ENCODE measurements at regions of chr22 and their contacts with region 1.

Region 1: DNA sequence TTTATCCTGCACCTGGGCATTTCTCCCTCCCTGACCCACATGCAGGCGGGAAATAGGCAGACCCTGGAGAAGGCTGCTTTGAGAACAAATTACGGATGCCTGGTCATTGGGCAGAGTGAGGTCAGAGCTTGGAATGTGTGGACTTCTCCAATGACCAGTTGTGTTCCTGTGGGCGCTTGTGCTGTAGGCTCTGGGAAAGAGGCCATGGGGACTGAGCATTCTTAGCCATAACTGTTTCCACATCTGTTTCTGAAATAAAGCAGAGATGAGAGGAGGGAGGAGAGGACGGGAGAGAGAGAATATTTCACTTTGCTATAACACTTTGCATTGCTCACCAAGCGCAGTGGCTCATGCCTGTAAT is 11.2 kb upstream of the TMEM184B start:
- DNase-seq: no peak
- H3K4me3 Mint-ChIP-seq: no peak overlapping the region
- H3K27ac Mint-ChIP-seq: peak overlapping the region; percentile 61
- H3K4me1 Mint-ChIP-seq: peaks cover 16% of the 10 kb centered on the region
- H3K27me3 Mint-ChIP-seq: no peaks in the 10 kb centered on the region
- CTCF ChIP-seq: no peak

Region 2: GRCh38 chr22:38298312-38299000 is 14.4 kb after region 1 on chr22:
- CTCF ChIA-PET with region 1: interaction called, 3 read pairs
- POLR2A ChIA-PET with region 1: interaction called, 30 read pairs
- intact Hi-C with region 1: no loop called
- DNase-seq: peak; percentile 100
- H3K4me3 Mint-ChIP-seq: peak overlapping the region; percentile 45
- H3K27ac Mint-ChIP-seq: peak overlapping the region; percentile 98
- H3K4me1 Mint-ChIP-seq: peaks cover 42% of the 10 kb centered on the region
- H3K27me3 Mint-ChIP-seq: no peaks in the 10 kb centered on the region
- CTCF ChIP-seq: peak; percentile 50

Region 3: DNA sequence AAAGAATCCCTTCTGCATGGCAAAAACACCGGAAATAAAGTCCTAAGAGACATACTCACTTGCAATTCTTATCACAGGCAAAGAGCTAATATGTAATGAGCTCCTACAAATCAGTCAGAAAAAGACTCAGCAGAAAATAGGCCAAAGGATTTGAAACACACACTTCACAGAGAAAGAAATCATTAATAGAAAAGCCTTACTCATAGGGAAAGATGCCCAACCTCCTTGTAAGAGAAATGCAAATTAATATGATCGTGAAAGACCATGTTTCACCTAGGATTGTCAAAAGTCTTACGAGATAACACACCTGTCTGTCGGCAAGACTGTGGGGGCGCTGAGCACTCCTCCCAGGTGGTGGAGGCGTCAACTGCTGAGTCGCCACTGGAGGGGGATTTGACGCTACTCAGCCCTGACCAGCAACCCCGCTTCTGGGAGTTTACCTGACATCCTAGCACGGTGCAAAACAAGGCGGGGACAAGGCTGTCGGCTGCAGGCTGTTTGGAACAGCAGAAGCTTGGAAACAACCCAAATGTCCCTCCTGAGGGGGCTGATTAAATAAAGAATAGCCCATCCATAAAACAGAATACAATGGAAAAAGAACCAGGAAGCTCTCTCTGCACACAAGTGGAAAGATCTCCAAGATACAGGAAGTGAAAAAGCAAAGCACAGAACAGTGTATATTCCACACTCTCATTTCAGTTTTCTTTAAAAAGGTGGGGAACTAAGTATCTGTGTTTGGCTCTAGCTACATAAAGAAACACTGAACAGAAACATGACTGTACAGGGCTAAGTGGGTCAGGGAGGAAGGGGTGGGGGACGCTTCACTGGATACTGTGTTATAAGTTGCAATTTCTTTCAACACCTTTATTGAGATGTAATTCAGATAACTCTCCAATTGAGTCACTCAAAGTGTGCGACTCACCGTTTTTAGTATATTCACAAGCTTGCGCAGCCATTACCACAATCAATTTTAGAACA is 21.7 kb after region 1 on chr22:
- CTCF ChIA-PET with region 1: no interaction called
- POLR2A ChIA-PET with region 1: interaction called, 12 read pairs
- intact Hi-C with region 1: no loop called
- DNase-seq: peak; percentile 53
- H3K4me3 Mint-ChIP-seq: peak overlapping the region; percentile 38
- H3K27ac Mint-ChIP-seq: peak overlapping the region; percentile 98
- H3K4me1 Mint-ChIP-seq: peaks cover 64% of the 10 kb centered on the region
- H3K27me3 Mint-ChIP-seq: no peaks in the 10 kb centered on the region
- CTCF ChIP-seq: no peak

Region 4: DNA sequence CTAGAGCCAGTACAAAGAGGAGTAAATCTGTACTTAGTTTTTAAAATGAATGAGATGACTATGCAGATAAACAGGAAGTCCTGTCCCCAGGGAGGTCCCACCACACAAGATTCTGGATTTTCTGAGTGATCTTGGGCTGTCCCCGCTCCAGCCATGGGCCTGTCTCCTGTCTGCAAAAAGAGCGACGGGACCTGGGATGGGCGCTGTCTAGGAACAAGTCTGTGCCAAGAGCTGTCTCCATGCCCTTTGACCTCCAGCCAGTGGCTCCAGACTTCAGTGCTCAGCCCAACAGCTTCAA is 27.2 kb after region 1 on chr22:
- CTCF ChIA-PET with region 1: no interaction called
- POLR2A ChIA-PET with region 1: interaction called, 17 read pairs
- intact Hi-C with region 1: no loop called
- DNase-seq: no peak
- H3K4me3 Mint-ChIP-seq: no peak overlapping the region
- H3K27ac Mint-ChIP-seq: peak overlapping the region; percentile 93
- H3K4me1 Mint-ChIP-seq: peaks cover 75% of the 10 kb centered on the region
- H3K27me3 Mint-ChIP-seq: no peaks in the 10 kb centered on the region
- CTCF ChIP-seq: no peak